Activated naive CD4-positive, alpha-beta T cell treated with anti-CD3 and anti-CD28 coated beads for 36 hours (primary cell): ENCODE measurements at regions of chr3 and their contacts with region 1.

Region 1: GRCh38 chr3:122415720-122416654 is at the start of gene WDR5B:
- DNase-seq: peak; percentile 99
- H3K4me3 Mint-ChIP-seq: peak within 1 kb of the TSS; percentile 95
- H3K27ac Mint-ChIP-seq: peak within 1 kb of the TSS; percentile 98
- H3K4me1 Mint-ChIP-seq: peaks cover 50% of the 10 kb centered on the region
- H3K27me3 Mint-ChIP-seq: no peaks in the 10 kb centered on the region
- total RNA-seq, gene WDR5B: 2.3 to 2.9 TPM

Region 2: DNA sequence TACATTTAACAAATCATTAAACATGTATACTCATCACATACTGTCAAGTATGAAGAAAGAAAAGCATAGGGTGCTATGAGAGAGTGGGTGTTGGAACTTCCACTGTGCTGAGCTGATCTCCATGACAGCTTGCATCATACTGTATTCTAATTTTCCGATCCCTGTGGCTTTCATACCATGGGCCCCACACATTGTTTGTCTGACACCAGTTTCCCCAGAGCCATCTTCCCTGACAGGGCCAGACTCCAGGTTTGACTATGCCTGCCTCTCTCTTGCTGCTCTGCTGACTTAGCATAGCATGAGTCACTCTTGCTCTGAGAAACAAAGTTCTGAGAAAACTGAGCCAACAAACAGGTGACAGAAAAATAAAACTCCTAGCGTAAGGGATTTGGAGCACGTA is 269.5 kb before region 1 on chr3:
- CTCF ChIA-PET with region 1: no interaction called
- intact Hi-C with region 1: loop called (anchors 5 kb)
- DNase-seq: peak; percentile 86
- H3K4me3 Mint-ChIP-seq: no peak overlapping the region
- H3K27ac Mint-ChIP-seq: peak overlapping the region; percentile 46
- H3K4me1 Mint-ChIP-seq: peaks cover 28% of the 10 kb centered on the region
- H3K27me3 Mint-ChIP-seq: peaks cover 1% of the 10 kb centered on the region

Region 3: GRCh38 chr3:122427857-122428471 is 12.0 kb after region 1 on chr3:
- CTCF ChIA-PET with region 1: interaction called, 5 read pairs
- intact Hi-C with region 1: loop called (anchors 1 kb)
- DNase-seq: no peak
- H3K4me3 Mint-ChIP-seq: no peak overlapping the region
- H3K27ac Mint-ChIP-seq: peak overlapping the region; percentile 63
- H3K4me1 Mint-ChIP-seq: peaks cover 20% of the 10 kb centered on the region
- H3K27me3 Mint-ChIP-seq: no peaks in the 10 kb centered on the region

Region 4: GRCh38 chr3:122564155-122564912 is 148.3 kb after region 1 on chr3 and contains the starts of genes DTX3L and PARP9:
- CTCF ChIA-PET with region 1: interaction called, 3 read pairs
- intact Hi-C with region 1: loop called (anchors 2 kb)
- DNase-seq: peak; percentile 75
- H3K4me3 Mint-ChIP-seq: peak within 1 kb of the TSS; percentile 87
- H3K27ac Mint-ChIP-seq: peak within 1 kb of the TSS; percentile 93
- H3K4me1 Mint-ChIP-seq: peaks cover 70% of the 10 kb centered on the region
- H3K27me3 Mint-ChIP-seq: no peaks in the 10 kb centered on the region
- total RNA-seq, gene DTX3L: 22.3 to 24.5 TPM
- total RNA-seq, gene PARP9: 20.4 to 21.1 TPM

Region 5: GRCh38 chr3:122793568-122794416 is 377.8 kb after region 1 on chr3 and contains the start of gene HSPBAP1:
- CTCF ChIA-PET with region 1: no interaction called
- intact Hi-C with region 1: loop called (anchors 1 kb)
- DNase-seq: peak; percentile 92
- H3K4me3 Mint-ChIP-seq: peak within 1 kb of the TSS; percentile 86
- H3K27ac Mint-ChIP-seq: peak within 1 kb of the TSS; percentile 80
- H3K4me1 Mint-ChIP-seq: peaks cover 30% of the 10 kb centered on the region
- H3K27me3 Mint-ChIP-seq: no peaks in the 10 kb centered on the region
- total RNA-seq, gene HSPBAP1: 3.0 to 3.2 TPM